Dendritic cell treated with granulocyte-macrophage colony-stimulating factor and Interleukin-4, amounts not matched to agents 40 ng/mL and 50 ng/mL, for 4 days (primary cell): ENCODE measurements at regions of chr7 and their contacts with region 1.

Region 1: GRCh38 chr7:140924019-140924820 is 509 bp downstream of the BRAF start:
- H3K4me3 Mint-ChIP-seq: no peak overlapping the region
- H3K27ac Mint-ChIP-seq: no peak overlapping the region
- H3K4me1 Mint-ChIP-seq: peaks cover 9% of the 10 kb centered on the region
- H3K27me3 Mint-ChIP-seq: peaks cover 2% of the 10 kb centered on the region

Region 2: GRCh38 chr7:140696680-140697446 is 227.4 kb before region 1 on chr7 and contains the start of gene NDUFB2:
- intact Hi-C with region 1: loop called (anchors 2 kb)
- H3K4me3 Mint-ChIP-seq: peak within 1 kb of the TSS; percentile 94
- H3K27ac Mint-ChIP-seq: peak within 1 kb of the TSS; percentile 98
- H3K4me1 Mint-ChIP-seq: peaks cover 35% of the 10 kb centered on the region
- H3K27me3 Mint-ChIP-seq: no peaks in the 10 kb centered on the region

Region 3: GRCh38 chr7:140903741-140904480 is 20.3 kb before region 1 on chr7:
- intact Hi-C with region 1: no loop called
- H3K4me3 Mint-ChIP-seq: no peak overlapping the region
- H3K27ac Mint-ChIP-seq: no peak overlapping the region
- H3K4me1 Mint-ChIP-seq: peaks cover 24% of the 10 kb centered on the region
- H3K27me3 Mint-ChIP-seq: no peaks in the 10 kb centered on the region

Region 4: GRCh38 chr7:140983802-140984201 is 59.6 kb after region 1 on chr7:
- intact Hi-C with region 1: no loop called
- H3K4me3 Mint-ChIP-seq: no peak overlapping the region
- H3K27ac Mint-ChIP-seq: no peak overlapping the region
- H3K4me1 Mint-ChIP-seq: peaks cover 19% of the 10 kb centered on the region
- H3K27me3 Mint-ChIP-seq: no peaks in the 10 kb centered on the region